ENCODE measurements at regions of chr1 and their contacts with region 1.

Region 1: DNA sequence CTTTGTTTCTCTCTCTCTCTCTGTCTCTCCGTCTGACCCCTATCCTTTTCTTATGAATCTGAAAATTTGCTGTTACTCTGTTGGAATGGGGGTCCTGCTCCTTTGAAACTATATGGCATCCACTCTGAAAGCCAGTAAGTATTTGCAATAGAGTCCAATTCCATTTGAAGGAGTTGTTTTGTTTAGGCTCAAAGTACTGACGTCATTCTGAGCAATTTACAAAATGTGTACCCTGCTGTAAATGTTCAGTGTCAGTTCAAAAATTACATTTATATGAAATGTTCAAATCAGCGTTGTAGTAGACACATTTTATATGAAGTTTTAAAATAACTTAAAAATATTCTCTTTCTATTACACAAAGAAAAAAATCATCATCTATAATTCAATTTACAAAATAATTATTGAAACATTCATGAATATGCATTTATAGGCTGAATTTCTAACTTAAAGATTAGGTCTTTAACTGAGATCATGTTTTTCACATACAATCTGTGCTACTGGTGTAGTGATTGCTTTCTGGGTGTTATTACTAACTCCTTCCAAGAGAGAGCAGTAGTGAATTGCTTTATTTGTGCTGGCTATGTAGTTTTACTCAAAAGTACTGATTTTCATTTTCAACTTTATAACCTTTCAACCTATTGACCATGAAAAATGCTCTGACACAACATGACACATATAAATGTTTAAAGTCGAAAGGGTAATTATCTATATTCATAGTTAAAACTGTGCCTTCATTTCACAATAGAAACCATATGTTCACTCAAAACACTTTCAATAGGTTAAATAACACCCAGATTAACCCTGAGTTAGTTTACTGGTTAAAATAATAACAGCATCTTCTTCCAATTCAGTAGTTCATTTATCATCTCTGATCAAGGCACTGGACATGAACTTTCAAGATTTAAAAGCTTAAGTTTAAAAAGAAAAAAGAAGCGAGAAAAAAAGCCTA is 253.1 kb upstream of the ADGRL4 start:
- DNase-seq: no peak
- ATAC-seq: peak; percentile 53; the same call in 1 of the 2 replicates
- H3K4me3 ChIP-seq: no peak overlapping the region
- H3K27ac ChIP-seq: no peak overlapping the region
- H3K4me1 ChIP-seq: no peaks in the 10 kb centered on the region
- H3K27me3 ChIP-seq: no peaks in the 10 kb centered on the region
- CTCF ChIP-seq: peak; percentile 21 to 52 (median 30); a peak in 4 of 6 replicates
- POLR2A ChIP-seq: no peak
- RAD21 ChIP-seq: peak; percentile 52

Region 2: DNA sequence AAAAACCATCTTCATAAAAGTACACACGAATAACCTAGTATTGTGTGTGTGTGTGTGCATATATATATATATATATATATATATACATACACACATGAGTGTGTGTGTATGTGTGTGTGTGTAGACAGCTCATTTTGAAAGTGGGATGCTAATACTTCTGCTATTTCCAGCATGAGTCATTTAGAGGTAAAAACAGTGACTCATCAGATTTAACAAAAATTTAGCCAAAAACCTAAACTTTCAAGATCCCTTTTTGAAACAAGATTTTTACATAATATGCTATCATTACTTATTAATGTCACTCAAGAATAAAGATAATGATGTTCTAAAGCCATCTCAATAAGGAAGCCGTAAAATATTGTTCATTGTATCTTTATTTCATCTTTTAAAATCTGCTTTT is 217.5 kb before region 1 on chr1:
- CTCF ChIA-PET with region 1: no interaction called
- POLR2A ChIA-PET with region 1: no interaction called
- RAD21 ChIA-PET with region 1: no interaction called
- intact Hi-C with region 1: no loop called
- DNase-seq: no peak
- ATAC-seq: no peak
- H3K4me3 ChIP-seq: no peak overlapping the region
- H3K27ac ChIP-seq: no peak overlapping the region
- H3K4me1 ChIP-seq: no peaks in the 10 kb centered on the region
- H3K27me3 ChIP-seq: no peaks in the 10 kb centered on the region
- CTCF ChIP-seq: no peak
- POLR2A ChIP-seq: no peak
- RAD21 ChIP-seq: no peak

Region 3: GRCh38 chr1:79271759-79272158 is 12.1 kb after region 1 on chr1:
- CTCF ChIA-PET with region 1: no interaction called
- POLR2A ChIA-PET with region 1: no interaction called
- RAD21 ChIA-PET with region 1: no interaction called
- intact Hi-C with region 1: no loop called
- DNase-seq: no peak
- ATAC-seq: no peak
- H3K4me3 ChIP-seq: no peak overlapping the region
- H3K27ac ChIP-seq: no peak overlapping the region
- H3K4me1 ChIP-seq: no peaks in the 10 kb centered on the region
- H3K27me3 ChIP-seq: no peaks in the 10 kb centered on the region
- CTCF ChIP-seq: no peak
- POLR2A ChIP-seq: no peak
- RAD21 ChIP-seq: no peak

Region 4: GRCh38 chr1:79353224-79353623 is 93.6 kb after region 1 on chr1:
- CTCF ChIA-PET with region 1: no interaction called
- POLR2A ChIA-PET with region 1: no interaction called
- RAD21 ChIA-PET with region 1: no interaction called
- intact Hi-C with region 1: loop called (anchors 1 kb)
- DNase-seq: peak; percentile 37
- ATAC-seq: peak; percentile 79
- H3K4me3 ChIP-seq: no peak overlapping the region
- H3K27ac ChIP-seq: no peak overlapping the region
- H3K4me1 ChIP-seq: no peaks in the 10 kb centered on the region
- H3K27me3 ChIP-seq: no peaks in the 10 kb centered on the region
- CTCF ChIP-seq: peak; percentile 19 to 57 (median 47); a peak in 5 of 6 replicates
- POLR2A ChIP-seq: no peak
- RAD21 ChIP-seq: peak; percentile 46

Region 5: DNA sequence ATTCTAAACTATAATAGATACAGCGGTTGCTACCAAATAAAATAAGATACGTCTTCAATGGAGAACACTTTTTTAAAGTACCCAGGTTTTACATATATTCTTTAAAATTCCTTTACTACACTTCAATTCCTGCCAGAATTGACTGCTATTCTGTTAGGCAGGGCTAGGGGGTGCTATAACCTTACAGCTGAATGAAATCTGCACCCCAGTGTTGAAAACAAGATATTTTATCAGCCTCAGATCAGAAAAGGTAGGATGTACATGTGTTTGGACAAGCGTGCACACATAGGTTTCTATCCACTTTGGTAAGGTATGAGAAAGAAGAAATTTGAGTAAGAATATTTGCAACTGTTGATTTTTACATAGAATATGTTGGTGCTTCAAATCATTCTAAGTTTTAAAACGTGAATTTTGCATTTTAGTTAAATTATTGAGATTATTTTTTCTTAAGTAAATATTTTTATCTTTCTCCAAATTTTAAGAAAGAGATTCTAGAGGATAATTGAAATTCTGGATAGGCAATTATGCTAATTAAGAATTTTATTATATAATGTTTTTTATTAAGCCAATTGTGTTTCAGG is 237.6 kb after region 1 on chr1:
- CTCF ChIA-PET with region 1: no interaction called
- POLR2A ChIA-PET with region 1: no interaction called
- RAD21 ChIA-PET with region 1: no interaction called
- intact Hi-C with region 1: loop called (anchors 10 kb)
- DNase-seq: peak; percentile 10
- ATAC-seq: peak; percentile 44; the same call in 1 of the 2 replicates
- H3K4me3 ChIP-seq: no peak overlapping the region
- H3K27ac ChIP-seq: no peak overlapping the region
- H3K4me1 ChIP-seq: no peaks in the 10 kb centered on the region
- H3K27me3 ChIP-seq: no peaks in the 10 kb centered on the region
- CTCF ChIP-seq: peak; percentile 49 to 88 (median 77); a peak in 5 of 6 replicates
- POLR2A ChIP-seq: no peak
- RAD21 ChIP-seq: peak; percentile 78